Dendritic cell treated with granulocyte-macrophage colony-stimulating factor and Interleukin-4, amounts not matched to agents 40 ng/mL and 50 ng/mL, for 4 days (primary cell): ENCODE measurements at regions of chr7 and their contacts with region 1.

Region 1: GRCh38 chr7:66591799-66592596 is 36.7 kb upstream of the KCTD7 start:
- H3K4me3 Mint-ChIP-seq: peak overlapping the region; percentile 87
- H3K27ac Mint-ChIP-seq: peak overlapping the region; percentile 93
- H3K4me1 Mint-ChIP-seq: peaks cover 42% of the 10 kb centered on the region
- H3K27me3 Mint-ChIP-seq: peaks cover 7% of the 10 kb centered on the region

Region 2: GRCh38 chr7:66493235-66494181 is 98.5 kb before region 1 on chr7:
- intact Hi-C with region 1: loop called (anchors 5 kb)
- H3K4me3 Mint-ChIP-seq: peak overlapping the region; percentile 84
- H3K27ac Mint-ChIP-seq: peak overlapping the region; percentile 98
- H3K4me1 Mint-ChIP-seq: peaks cover 25% of the 10 kb centered on the region
- H3K27me3 Mint-ChIP-seq: peaks cover 1% of the 10 kb centered on the region

Region 3: DNA sequence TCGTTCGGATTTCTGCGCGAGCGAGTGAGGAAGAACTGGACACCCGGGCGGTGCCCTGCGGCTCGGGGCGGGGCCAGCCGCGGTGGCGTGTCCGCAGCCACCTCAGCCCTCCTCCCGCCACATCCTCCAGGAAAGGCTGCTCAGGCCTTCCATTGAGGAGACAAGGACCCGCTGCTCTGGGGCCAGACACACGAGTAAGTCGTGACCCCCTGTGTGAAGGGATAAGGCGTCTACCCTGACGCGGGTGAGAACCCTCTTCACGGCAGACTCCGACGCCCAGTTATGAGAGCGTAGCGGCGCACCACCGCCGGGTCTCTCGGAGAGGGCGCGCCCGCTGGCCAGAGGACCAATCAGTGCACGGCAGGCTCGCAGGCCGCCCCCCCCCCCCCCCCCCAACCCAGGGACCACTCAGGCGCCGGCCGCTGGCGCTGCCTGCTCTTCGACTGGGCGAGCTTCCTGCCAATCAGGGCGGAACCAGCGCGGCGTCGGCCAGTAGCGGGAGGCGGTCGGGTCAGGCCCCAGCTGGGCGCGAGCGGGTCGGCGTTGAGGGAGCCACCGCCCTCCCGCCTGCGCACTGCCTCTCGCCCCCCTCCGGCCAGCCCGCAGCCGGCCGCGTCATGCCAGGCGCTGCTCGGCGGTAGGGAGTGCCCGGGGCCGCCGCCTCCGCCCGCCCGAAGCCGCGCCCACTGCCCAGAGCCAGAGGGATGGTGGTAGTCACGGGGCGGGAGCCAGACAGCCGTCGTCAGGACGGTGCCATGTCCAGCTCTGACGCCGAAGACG is 36.6 kb after region 1 on chr7 and contains the start of gene KCTD7:
- intact Hi-C with region 1: loop called (anchors 1 kb)
- H3K4me3 Mint-ChIP-seq: peak within 1 kb of the TSS; percentile 85
- H3K27ac Mint-ChIP-seq: peak within 1 kb of the TSS; percentile 98
- H3K4me1 Mint-ChIP-seq: peaks cover 53% of the 10 kb centered on the region
- H3K27me3 Mint-ChIP-seq: peaks cover 21% of the 10 kb centered on the region

Region 4: DNA sequence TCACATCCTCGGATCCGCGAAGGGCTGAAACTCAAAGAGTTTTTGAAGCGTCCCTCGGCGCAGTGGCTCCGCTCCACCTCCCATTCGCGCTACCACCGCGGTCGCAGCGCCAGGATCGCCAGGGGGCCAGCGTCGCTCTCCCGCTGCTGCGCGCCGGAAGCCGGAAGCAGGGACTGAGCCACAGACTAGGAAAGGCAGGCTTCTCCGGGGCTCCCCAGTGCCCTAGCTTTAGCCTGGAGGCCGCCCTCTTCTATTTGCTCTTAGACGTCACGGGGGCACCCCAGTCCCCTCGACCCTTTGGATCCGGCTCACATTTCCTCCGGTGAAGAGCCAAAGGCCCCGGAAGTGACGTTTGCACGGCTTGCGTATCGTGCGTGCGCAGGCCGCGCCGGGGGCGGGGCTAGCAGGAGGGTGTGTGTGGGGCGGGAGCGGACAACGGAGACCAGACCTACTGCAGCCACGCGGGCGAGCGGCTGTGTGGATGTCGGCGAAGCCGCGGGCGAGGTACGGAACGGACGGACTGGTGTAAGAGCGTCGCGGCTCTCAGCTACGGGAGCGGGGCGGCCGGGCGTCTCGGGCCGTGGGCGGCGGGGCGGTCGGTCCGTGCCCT is 62.2 kb after region 1 on chr7:
- intact Hi-C with region 1: loop called (anchors 1 kb)
- H3K4me3 Mint-ChIP-seq: peak overlapping the region; percentile 96
- H3K27ac Mint-ChIP-seq: peak overlapping the region; percentile 93
- H3K4me1 Mint-ChIP-seq: peaks cover 39% of the 10 kb centered on the region
- H3K27me3 Mint-ChIP-seq: no peaks in the 10 kb centered on the region